ENCODE measurements at regions of chr17 and their contacts with region 1.

Region 1: DNA sequence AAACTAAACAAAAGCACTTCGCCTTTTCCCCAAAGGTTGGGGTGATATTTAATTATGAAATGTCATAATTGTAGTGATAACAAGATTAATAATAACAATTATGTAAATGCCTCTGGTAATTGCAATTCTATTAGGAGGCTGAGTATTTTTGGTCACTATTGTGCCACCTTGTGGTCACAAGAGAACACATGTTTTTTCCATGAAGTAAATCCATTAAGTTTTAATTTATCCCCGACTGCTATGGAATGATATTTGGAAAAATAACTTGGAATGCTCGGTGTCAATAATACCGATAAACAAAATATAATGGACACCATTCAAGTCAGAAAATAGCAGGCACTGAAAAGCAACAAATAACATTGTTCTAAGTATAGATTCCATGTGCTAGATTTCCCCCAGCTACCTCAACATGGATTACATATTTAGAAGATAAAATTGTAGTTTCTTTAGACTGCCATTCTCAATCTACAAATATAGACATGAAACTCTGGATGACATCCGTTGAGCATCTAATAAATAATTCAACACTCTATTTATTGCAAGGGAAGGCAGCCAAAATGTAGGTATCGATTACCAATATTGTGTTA is 25.0 kb upstream of the KCNJ2 start:
- DNase-seq: no peak
- H3K4me3 ChIP-seq: no peak overlapping the region
- H3K27ac ChIP-seq: no peak overlapping the region
- H3K4me1 ChIP-seq: no peaks in the 10 kb centered on the region
- H3K27me3 ChIP-seq: no peaks in the 10 kb centered on the region
- CTCF ChIP-seq: peak; percentile 45 to 65 (median 64)

Region 2: DNA sequence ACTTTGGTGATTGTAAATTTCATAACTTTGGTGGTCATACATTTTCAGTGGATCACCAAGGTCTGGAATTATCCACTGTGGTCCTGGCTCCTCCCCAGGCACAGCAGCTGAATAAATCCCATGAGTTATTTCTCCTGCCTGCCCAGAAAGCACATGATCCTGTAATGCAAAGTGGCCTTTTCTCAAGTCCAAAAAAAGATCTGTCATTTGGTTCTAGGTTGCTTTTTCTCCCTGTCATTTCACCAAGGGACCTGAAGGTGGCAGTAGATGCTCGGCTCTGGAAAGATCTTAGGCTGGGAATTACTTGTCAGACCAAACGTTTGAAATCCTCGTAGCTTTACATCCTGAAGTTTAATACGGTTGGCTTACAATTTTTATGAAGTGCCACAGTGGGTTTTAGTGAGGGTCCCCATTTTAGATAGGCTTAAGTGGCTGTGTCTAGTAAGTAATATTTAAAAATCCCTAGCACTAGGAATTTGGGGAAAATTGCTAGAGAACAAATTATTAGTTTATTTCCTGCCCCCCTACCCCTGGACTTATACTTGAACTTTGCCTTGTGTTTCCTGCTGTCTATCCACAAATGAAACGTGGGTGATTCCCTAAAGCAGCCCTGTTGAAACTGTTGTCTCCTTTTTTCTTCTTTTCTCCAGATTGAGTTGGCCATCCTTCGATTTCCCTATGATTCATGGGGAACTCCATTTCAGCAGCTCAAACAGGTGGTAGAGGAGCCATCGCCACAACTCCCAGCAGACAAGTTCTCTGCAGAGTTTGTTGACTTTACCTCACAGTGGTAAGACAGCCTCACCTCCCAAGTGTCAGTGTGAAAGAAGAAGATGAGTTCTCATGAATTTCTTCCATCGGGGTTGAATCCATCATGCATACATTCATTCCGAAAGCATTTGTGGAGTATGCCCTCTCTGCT is 618.2 kb before region 1 on chr17:
- intact Hi-C with region 1: loop called (anchors 1 kb)
- DNase-seq: peak in 1 of 2 donors; percentile 64
- H3K4me3 ChIP-seq: no peak overlapping the region
- H3K27ac ChIP-seq: no peak overlapping the region
- H3K4me1 ChIP-seq: no peaks in the 10 kb centered on the region
- H3K27me3 ChIP-seq: no peaks in the 10 kb centered on the region
- CTCF ChIP-seq: peak; percentile 46 to 90 (median 83)

Region 3: DNA sequence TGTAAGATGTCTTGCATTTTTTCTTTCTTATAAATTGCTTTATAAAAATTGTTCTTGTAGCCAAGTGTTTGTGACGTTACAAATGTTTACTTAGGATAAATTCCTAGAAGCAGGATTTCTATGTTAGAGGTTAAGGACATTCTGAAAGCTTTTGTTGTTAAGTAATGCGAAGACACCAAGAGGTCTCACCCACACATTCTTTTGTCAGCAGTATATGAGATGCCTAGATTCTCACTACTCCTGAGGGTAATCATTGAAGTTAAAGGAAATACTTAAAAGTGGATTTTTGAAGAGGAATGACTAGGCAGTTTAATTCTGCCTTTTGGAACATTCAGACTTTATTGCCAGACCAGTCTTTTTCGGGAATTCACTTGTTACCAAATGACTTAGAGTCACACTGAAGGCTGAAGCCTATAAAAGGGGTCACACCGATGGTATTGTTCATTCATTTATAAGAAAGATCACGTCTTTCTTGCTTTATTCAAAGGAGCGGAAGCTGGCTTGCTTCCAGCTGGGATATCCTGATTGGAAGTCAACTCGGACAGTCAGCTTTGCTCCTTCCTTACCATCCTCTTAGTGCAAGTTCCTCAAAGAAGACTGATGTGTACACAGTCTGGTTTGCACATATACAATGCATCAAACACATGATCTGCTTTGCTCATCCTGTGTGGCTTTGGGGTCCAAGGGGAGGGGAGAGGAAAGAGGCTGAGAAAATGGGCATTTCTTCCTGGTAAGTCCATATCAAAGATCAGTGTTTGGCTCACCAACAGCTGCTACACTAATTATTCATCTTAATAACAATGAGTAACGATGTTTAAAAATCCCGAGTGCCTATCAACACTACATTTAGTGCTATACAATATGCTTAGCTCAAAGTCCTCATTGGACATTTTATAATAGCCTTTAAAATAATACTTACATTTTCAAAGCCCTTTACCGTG is 569.8 kb before region 1 on chr17:
- intact Hi-C with region 1: loop called (anchors 1 kb)
- DNase-seq: no peak
- H3K4me3 ChIP-seq: no peak overlapping the region
- H3K27ac ChIP-seq: peak overlapping the region in 1 of 2 donors; percentile 22
- H3K4me1 ChIP-seq: peaks cover 0 to 17% of the 10 kb centered on the region in 2 donors
- H3K27me3 ChIP-seq: no peaks in the 10 kb centered on the region
- CTCF ChIP-seq: no peak

Region 4: GRCh38 chr17:69607162-69607834 is 537.1 kb before region 1 on chr17:
- intact Hi-C with region 1: loop called (anchors 1 kb)
- DNase-seq: peak in 1 of 2 donors; percentile 86
- H3K4me3 ChIP-seq: no peak overlapping the region
- H3K27ac ChIP-seq: peak overlapping the region; percentile 32 to 71
- H3K4me1 ChIP-seq: peaks cover 0 to 23% of the 10 kb centered on the region in 2 donors
- H3K27me3 ChIP-seq: no peaks in the 10 kb centered on the region
- CTCF ChIP-seq: peak; percentile 72 to 82 (median 79)